ENCODE measurements at regions of chr6 and their contacts with region 1.

Region 1: DNA sequence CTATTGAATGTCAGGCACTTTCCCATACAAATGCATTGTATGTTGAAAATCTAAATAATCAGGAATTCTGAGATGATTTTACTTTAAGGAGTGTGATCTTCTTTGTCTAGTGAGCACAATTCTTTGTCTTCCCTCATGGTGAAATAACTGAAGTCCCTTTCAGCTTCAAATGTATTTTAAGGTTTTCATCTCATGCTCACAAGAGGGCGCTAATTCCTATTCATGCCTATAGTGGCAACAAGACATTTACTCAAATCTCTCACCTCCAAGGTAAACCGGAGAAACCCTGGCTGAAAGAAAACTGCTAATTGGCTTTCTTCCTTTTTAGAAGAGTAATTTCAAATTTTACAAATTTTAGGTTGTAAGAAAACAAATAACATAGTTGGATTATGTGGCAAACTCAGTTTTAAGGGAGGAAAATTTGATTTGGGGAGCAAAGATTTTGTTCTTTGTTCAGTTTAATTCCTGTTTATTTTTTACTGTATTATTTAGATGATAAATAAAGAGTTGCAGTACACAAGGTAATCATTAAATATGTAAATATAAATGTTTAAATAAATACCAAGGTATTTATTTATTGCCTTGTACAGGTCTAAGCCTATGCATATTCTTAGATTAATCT is 69.1 kb downstream of the SLC35F1 start:
- DNase-seq: peak in 4 of 5 donors; percentile 26 to 39 (median 30)
- H3K4me3 ChIP-seq: no peak overlapping the region
- H3K4me3 Mint-ChIP-seq: no peak overlapping the region
- H3K27ac ChIP-seq: no peak overlapping the region
- H3K27ac Mint-ChIP-seq: no peak overlapping the region
- H3K4me1 ChIP-seq: no peaks in the 10 kb centered on the region
- H3K4me1 Mint-ChIP-seq: no peaks in the 10 kb centered on the region
- H3K27me3 ChIP-seq: no peaks in the 10 kb centered on the region
- H3K27me3 Mint-ChIP-seq: peaks cover 4% of the 10 kb centered on the region in 2 donors

Region 2: GRCh38 chr6:117906853-117907599 is 69.1 kb before region 1 on chr6 and contains the start of gene SLC35F1:
- CTCF ChIA-PET with region 1: no interaction called
- POLR2A ChIA-PET with region 1: no interaction called
- intact Hi-C with region 1: no loop called
- DNase-seq: peak in 2 of 5 donors; percentile 9
- H3K4me3 ChIP-seq: no peak within 1 kb of the TSS
- H3K4me3 Mint-ChIP-seq: peak within 1 kb of the TSS; percentile 50 to 81 (median 69)
- H3K27ac ChIP-seq: no peak within 1 kb of the TSS
- H3K27ac Mint-ChIP-seq: no peak within 1 kb of the TSS
- H3K4me1 ChIP-seq: peaks cover 4% of the 10 kb centered on the region
- H3K4me1 Mint-ChIP-seq: peaks cover 3 to 12% (median 9%) of the 10 kb centered on the region in 4 donors
- H3K27me3 ChIP-seq: peaks cover 14% of the 10 kb centered on the region
- H3K27me3 Mint-ChIP-seq: peaks cover 41 to 55% of the 10 kb centered on the region in 2 donors
- total RNA-seq, gene SLC35F1: not detected

Region 3: DNA sequence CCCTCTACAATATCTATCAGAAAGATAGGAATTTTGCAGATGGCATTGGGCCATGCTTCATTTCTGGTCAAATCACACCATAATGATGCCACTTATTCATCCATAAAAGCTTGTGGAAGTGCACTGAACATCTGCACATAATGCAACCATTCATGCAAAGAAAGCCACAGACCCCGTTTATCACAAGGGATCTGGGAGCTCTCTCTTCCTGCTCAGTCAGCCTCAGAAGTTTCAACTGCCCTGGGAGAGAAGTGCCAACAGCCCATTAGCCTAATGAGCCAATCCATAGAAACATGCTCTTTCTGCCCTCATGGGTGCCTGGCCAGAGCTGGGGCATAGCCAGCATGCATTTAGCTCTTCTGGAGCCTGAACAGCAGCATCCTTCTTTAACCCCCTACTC is 16.7 kb after region 1 on chr6:
- CTCF ChIA-PET with region 1: interaction called, 10 read pairs
- POLR2A ChIA-PET with region 1: no interaction called
- intact Hi-C with region 1: no loop called
- DNase-seq: no peak
- H3K4me3 ChIP-seq: no peak overlapping the region
- H3K4me3 Mint-ChIP-seq: no peak overlapping the region
- H3K27ac ChIP-seq: no peak overlapping the region
- H3K27ac Mint-ChIP-seq: no peak overlapping the region
- H3K4me1 ChIP-seq: no peaks in the 10 kb centered on the region
- H3K4me1 Mint-ChIP-seq: no peaks in the 10 kb centered on the region
- H3K27me3 ChIP-seq: no peaks in the 10 kb centered on the region
- H3K27me3 Mint-ChIP-seq: peaks cover 0 to 4% of the 10 kb centered on the region in 2 donors

Region 4: GRCh38 chr6:118551063-118552053 is 575.2 kb after region 1 on chr6:
- CTCF ChIA-PET with region 1: interaction called, 5 read pairs
- POLR2A ChIA-PET with region 1: no interaction called
- intact Hi-C with region 1: loop called (anchors 1 kb)
- DNase-seq: peak in 4 of 5 donors; percentile 30 to 54 (median 41)
- H3K4me3 ChIP-seq: no peak overlapping the region
- H3K4me3 Mint-ChIP-seq: peak overlapping the region in 1 of 8 donors; percentile 57
- H3K27ac ChIP-seq: no peak overlapping the region
- H3K27ac Mint-ChIP-seq: peak overlapping the region in 3 of 7 donors; percentile 52 to 74 (median 72)
- H3K4me1 ChIP-seq: peaks cover 23% of the 10 kb centered on the region
- H3K4me1 Mint-ChIP-seq: peaks cover 18 to 37% (median 31%) of the 10 kb centered on the region in 4 donors
- H3K27me3 ChIP-seq: no peaks in the 10 kb centered on the region
- H3K27me3 Mint-ChIP-seq: no peaks in the 10 kb centered on the region

Region 5: DNA sequence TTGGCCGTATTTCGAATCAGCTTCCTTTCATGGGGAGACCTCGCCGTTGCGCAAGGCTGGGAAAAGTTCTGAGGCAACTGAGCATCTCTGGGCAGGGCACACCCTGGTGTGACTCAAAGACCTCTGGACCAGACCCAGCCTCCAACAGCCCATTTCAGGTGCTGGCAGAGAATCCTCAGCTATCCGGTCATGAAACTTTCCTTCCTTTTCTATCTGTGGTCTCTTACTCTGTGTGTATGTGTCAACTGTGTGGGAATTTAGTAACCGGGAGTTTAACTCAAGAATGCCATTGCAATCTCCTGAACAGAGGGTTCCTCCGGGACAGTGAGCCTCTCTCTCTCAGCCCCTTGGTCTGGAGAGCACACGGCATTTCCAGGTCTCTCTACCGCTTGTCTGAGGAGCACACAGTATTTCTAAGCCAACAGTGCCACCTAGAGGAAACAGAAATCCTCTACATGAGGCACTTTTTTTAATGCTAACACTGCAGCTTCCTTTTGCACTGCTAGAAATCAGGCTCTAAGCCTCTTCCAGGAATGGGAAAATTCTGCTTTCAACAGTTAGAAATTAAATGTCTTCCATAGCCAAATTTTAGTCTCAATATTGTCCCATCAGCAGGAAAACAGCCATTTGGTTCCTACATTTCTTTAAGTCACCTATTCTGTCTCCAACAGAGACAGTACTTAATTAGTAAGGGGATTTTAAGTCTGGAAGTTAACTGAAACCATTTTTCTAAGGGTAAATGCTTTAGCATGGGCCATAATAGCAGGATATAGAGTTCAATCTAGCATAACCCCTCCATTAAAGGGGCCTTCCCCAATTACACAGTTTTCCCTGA is 604.7 kb after region 1 on chr6:
- CTCF ChIA-PET with region 1: interaction called, 6 read pairs
- POLR2A ChIA-PET with region 1: no interaction called
- intact Hi-C with region 1: loop called (anchors 1 kb)
- DNase-seq: peak in 4 of 5 donors; percentile 18 to 43 (median 40)
- H3K4me3 ChIP-seq: no peak overlapping the region
- H3K4me3 Mint-ChIP-seq: peak overlapping the region in 1 of 8 donors; percentile 21
- H3K27ac ChIP-seq: no peak overlapping the region
- H3K27ac Mint-ChIP-seq: peak overlapping the region; percentile 30 to 91 (median 76)
- H3K4me1 ChIP-seq: no peaks in the 10 kb centered on the region
- H3K4me1 Mint-ChIP-seq: peaks cover 7 to 20% (median 12%) of the 10 kb centered on the region in 4 donors
- H3K27me3 ChIP-seq: no peaks in the 10 kb centered on the region
- H3K27me3 Mint-ChIP-seq: no peaks in the 10 kb centered on the region

Region 6: DNA sequence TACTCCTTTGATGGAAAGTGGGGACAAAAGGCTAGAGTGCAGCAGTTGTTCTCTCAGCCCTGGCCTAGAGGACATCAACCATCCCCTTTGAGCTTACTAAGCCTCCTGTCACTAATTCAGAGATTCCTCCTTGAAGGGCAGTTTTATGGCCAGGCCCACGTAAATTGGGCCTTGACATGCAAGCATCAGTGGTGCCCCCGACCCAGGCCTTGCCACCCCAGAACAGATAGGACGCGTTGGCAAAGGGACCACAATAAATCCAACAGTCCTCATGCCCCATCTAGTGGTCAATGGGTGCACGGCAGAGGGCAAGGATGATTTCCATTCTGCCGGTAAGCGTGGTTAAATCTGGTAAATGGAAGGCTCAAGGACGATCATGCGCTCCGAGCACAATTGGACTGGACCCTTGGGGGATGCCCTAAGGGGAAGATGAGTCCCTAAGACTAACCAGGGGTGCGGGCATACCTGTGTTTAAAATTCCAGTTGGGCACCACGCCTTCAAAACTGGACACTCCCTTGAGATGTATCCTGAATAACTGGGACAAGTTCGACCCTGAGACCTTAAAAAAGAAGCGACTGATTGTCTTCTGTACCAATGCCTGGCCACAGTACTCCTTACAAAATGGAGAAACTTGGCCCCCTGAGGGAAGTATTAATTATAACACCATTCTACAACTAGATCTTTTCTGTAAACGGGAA is 642.7 kb after region 1 on chr6:
- CTCF ChIA-PET with region 1: interaction called, 3 read pairs
- POLR2A ChIA-PET with region 1: no interaction called
- intact Hi-C with region 1: loop called (anchors 1 kb)
- DNase-seq: peak; percentile 54 to 62 (median 57)
- H3K4me3 ChIP-seq: no peak overlapping the region
- H3K4me3 Mint-ChIP-seq: peak overlapping the region in 4 of 8 donors; percentile 8 to 59 (median 42)
- H3K27ac ChIP-seq: no peak overlapping the region
- H3K27ac Mint-ChIP-seq: peak overlapping the region in 6 of 7 donors; percentile 79 to 93 (median 84)
- H3K4me1 ChIP-seq: peaks cover 22% of the 10 kb centered on the region
- H3K4me1 Mint-ChIP-seq: peaks cover 41 to 72% (median 54%) of the 10 kb centered on the region in 4 donors
- H3K27me3 ChIP-seq: no peaks in the 10 kb centered on the region
- H3K27me3 Mint-ChIP-seq: no peaks in the 10 kb centered on the region